ENCODE measurements at regions of chr7 and their contacts with region 1.

Region 1: DNA sequence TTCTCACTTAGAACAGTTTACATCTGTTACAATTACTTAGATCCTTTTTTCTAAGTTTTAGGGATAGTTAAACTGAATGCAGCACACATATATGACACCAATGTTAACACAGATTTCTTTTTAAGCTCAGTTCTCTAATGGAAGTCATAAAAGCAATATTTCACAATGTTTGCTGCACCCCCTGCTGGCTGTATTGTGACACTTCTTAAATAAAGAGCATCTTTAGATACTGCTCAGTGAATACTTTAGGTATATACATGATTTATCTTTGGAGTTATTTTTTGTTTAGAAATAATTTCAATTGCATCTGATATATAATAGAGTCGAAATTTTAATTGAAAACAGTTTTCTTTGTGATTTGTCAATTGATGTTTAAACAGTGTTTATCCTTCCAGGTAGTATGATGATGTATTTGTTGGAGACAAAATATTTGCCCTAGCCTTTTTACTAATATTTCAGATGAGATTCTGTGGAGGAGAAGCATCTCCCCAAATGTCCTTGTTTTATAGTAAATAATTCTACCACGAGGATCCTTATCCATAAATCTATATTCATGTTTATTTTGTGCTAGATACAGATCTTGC is 174.4 kb downstream of the ST7 start:
- DNase-seq: peak; percentile 47
- H3K4me3 ChIP-seq: no peak overlapping the region
- H3K27ac ChIP-seq: no peak overlapping the region
- H3K4me1 ChIP-seq: no peaks in the 10 kb centered on the region
- H3K27me3 ChIP-seq: no peaks in the 10 kb centered on the region
- CTCF ChIP-seq: peak; percentile 60 to 90 (median 80)
- POLR2A ChIP-seq: no peak

Region 2: GRCh38 chr7:116929914-116930913 is 197.5 kb before region 1 on chr7:
- intact Hi-C with region 1: loop called (anchors 2 kb)
- DNase-seq: peak; percentile 79
- H3K4me3 ChIP-seq: no peak overlapping the region
- H3K27ac ChIP-seq: no peak overlapping the region
- H3K4me1 ChIP-seq: no peaks in the 10 kb centered on the region
- H3K27me3 ChIP-seq: no peaks in the 10 kb centered on the region
- CTCF ChIP-seq: peak; percentile 82 to 93 (median 86)
- POLR2A ChIP-seq: no peak

Region 3: DNA sequence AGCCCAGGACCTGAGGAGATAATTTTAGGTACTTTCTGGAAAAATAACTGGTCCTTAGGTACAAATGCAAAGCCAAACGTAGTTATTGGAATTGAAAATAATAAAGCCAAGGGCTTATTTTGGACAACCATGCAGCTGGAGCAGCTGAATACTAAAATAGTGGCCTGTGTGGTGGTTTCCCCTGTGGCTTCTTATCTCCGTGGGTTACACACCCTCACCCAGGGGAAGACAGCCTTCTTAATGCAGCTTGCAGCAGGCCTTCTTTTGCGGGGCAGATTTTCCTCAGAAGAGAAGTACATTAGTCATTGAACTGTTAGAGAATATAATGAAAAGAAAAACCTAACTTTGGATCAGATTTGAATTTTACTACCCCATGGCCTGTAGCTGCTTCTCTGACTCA is 40.9 kb before region 1 on chr7:
- intact Hi-C with region 1: no loop called
- DNase-seq: no peak
- H3K4me3 ChIP-seq: no peak overlapping the region
- H3K27ac ChIP-seq: no peak overlapping the region
- H3K4me1 ChIP-seq: no peaks in the 10 kb centered on the region
- H3K27me3 ChIP-seq: no peaks in the 10 kb centered on the region
- CTCF ChIP-seq: no peak
- POLR2A ChIP-seq: no peak

Measured in prostate gland (tissue), 2 donors.